ENCODE measurements at regions of chr2 and their contacts with region 1.

Region 1: DNA sequence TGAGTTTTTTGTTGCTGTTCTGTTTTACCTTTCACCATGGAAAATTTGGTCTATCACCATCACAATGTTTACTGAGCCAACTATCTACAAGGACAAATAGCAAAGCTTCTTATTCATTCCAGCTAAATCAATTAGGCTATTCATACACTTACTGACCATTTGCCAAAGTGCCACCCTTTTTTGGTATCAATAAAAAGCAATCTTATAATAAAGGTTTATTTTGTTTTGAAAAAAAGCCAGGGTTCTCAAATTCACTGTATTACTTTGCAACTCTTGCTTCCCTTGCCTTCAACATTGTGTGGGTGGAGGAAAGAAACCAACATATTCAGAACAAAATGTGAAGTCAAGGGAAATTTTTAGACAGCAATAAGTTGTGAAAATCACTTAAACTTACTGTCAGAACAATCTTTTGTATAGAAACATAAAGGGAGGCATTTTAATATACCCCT is 15.3 kb downstream of the PELI1 start:
- DNase-seq: no peak
- ATAC-seq: no peak
- H3K4me3 Mint-ChIP-seq: peak overlapping the region in 1 of 10 donors; percentile 42
- H3K27ac Mint-ChIP-seq: peak overlapping the region in 1 of 10 donors; percentile 58
- H3K4me1 Mint-ChIP-seq: peaks cover 8 to 66% (median 57%) of the 10 kb centered on the region in 4 donors
- H3K27me3 Mint-ChIP-seq: no peaks in the 10 kb centered on the region

Region 2: DNA sequence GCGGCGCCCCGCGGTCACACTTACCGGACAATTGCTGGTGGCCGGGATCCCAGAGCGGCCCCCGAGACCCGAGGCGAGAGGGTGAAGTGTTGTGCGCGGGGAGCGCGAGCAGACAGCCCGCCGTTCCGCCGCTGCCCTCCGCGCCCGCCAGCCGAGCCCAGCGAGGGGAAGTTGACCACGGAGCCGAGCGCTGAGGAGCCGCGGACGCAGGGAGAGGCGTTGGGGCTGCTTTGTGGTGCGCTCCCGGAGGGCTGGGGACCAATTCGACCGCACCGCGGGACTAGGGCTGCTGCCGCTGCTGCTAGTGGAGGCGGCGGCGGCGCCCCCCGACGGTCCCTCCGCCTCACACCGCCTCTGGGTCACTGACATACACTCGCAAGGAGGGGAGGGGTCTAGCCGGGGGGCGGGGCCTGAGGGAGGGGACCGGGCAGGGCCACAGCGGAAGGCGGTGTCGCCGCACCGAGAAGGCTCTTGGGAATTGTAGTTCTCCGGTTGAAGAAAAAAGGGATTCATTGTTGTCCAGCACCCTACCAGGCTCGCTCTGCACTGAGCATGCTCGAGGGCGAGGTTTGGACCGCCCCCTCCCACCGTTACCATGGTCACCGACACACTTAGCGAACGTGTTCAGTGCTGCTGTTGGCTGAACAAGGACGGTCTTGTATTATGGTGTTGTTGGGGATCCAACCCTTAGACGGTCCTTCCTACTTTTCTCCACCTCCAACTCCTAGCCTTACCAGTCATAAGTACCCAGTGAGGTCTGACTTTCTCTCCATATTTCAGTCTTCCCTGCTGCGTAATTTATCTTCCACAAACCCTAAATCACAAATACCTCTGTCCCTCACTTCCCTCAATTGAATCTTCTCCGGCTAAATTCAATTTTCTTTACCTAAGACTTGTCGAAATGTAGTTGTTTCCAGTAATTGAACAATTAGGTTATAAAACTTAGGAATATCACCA is 15.4 kb after region 1 on chr2 and contains the start of gene PELI1:
- POLR2A ChIA-PET with region 1: interaction called, 11 read pairs
- DNase-seq: peak; percentile 82 to 97 (median 90)
- ATAC-seq: peak; percentile 88 to 89
- H3K4me3 Mint-ChIP-seq: peak within 1 kb of the TSS; percentile 89 to 99 (median 96)
- H3K27ac Mint-ChIP-seq: peak within 1 kb of the TSS; percentile 93 to 98 (median 97)
- H3K4me1 Mint-ChIP-seq: peaks cover 12 to 31% (median 31%) of the 10 kb centered on the region in 4 donors
- H3K27me3 Mint-ChIP-seq: no peaks in the 10 kb centered on the region
- polyA plus RNA-seq, gene PELI1: 4.7 to 5.8 (median 5.3) TPM

Measured in naive thymus-derived CD8-positive, alpha-beta T cell (primary cell).